GM23248 (cell line): ENCODE measurements at regions of chr5 and their contacts with region 1.

Region 1: DNA sequence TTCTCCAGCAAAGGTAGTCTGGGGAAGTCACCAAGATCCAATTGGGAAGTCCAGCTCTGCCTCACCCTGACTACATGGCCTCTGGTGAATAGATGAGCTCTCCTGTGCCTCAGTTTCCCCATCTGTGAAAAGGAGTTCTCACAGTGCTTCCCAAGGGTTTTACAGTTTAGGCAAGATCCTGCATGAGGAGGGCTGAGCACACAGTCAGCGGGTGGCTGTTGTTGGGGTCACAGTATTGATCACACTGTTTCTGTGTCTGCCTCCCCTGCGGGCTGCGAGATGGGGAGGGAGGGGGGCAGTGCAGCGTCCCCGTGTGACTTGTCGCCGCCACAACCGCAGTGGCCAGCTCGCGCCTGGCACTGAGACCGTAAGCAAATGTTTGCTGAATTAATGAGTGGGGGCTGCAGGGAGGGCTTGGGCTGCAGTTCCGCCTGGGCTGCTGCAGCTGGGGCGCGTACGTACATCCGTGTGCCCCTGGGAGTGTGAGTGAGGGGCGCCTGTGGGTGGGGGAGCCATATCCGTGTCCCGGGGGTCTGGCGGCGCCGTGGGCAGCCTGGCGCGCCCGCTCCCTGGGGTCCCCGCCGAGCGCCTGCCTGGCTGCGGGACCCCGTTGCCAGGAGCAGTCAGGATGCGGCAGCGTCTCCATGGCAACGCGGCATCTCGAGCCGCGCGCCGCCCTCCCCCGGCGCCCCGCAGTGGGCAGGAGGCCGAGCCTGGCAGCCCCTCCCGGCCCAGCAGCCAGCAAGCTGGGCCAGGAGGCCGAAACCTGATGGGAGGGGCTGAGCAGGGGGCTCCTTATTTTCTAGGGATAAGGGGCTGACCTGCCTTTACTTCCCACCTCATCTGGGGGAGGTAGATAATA is 31.4 kb upstream of the PSD2 start:
- DNase-seq: peak; percentile 46
- H3K4me3 ChIP-seq: no peak overlapping the region
- H3K27ac ChIP-seq: no peak overlapping the region
- H3K4me1 ChIP-seq: peaks cover 3% of the 10 kb centered on the region; the same call in 1 of the 2 replicates
- H3K27me3 ChIP-seq: peaks cover 9% of the 10 kb centered on the region; the same call in 1 of the 2 replicates

Region 2: GRCh38 chr5:139633295-139634027 is 130.7 kb before region 1 on chr5:
- in situ Hi-C with region 1: loop called (anchors 5 kb)
- DNase-seq: peak; percentile 78
- H3K4me3 ChIP-seq: no peak overlapping the region
- H3K27ac ChIP-seq: no peak overlapping the region
- H3K4me1 ChIP-seq: peaks cover 25% of the 10 kb centered on the region
- H3K27me3 ChIP-seq: no peaks in the 10 kb centered on the region

Region 3: DNA sequence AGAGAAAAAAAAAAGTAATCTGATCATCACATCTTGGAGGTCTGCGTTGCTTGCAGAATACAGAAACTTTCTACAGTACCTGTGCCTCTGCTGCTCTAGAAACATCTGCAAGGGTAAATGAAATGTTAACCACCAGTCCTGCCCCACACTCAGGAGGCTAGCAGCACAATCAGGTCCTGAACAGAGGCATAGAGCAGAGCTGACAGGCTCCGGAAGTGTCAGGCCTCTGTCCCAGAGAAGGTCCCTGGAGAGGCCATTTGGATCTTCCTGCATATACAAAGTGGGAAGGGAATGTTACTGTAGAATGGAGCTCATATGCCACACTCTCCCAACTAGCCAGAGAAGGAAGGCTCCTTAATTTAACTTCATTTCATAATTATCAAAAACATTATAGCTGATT is 271.7 kb after region 1 on chr5:
- in situ Hi-C with region 1: no loop called
- DNase-seq: no peak
- H3K4me3 ChIP-seq: no peak overlapping the region
- H3K27ac ChIP-seq: no peak overlapping the region
- H3K4me1 ChIP-seq: no peaks in the 10 kb centered on the region
- H3K27me3 ChIP-seq: no peaks in the 10 kb centered on the region; the same call in 1 of the 2 replicates

Region 4: GRCh38 chr5:140113699-140114263 is 349.6 kb after region 1 on chr5 and contains the start of gene PURA:
- in situ Hi-C with region 1: no loop called
- DNase-seq: peak; percentile 97
- H3K4me3 ChIP-seq: peak within 1 kb of the TSS; percentile 78
- H3K27ac ChIP-seq: peak within 1 kb of the TSS; percentile 69
- H3K4me1 ChIP-seq: peaks cover 47% of the 10 kb centered on the region
- H3K27me3 ChIP-seq: no peaks in the 10 kb centered on the region
- total RNA-seq, gene PURA: 24.2 and 30.6 TPM in 2 replicates

Region 5: DNA sequence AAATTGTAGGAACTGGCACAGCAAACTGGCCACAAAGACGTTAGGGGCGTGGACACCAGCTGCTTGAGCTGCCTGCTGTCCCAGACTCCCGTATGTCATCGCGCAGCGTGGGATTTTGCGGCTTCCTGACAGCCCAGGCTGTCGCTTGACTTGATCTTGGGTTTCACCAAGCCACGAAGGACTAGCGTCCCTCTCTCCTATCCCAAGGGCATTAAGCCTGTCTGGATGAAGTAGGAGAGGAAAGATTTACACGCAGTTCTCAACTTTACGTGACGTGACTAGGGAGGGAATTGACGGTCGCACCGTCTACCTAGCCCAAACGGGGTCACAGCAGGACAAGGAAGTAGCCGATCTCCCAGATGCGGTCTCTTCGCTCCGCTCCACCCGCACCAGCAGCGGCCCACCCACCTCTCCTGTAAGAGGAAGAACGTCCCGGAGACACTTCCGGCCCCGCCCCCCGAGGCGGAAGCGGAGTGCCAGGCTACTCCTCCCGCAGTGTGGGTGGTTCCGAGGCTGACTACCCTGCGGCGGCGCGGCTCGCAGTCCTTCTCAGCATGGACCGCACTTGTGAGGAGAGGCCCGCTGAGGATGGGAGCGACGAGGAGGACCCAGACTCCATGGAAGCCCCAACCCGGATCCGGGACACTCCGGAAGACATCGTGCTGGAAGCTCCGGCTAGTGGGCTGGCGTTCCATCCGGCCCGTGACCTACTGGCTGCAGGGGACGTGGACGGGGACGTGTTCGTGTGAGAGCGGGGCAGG is 900.4 kb after region 1 on chr5 and contains the start of gene WDR55:
- in situ Hi-C with region 1: no loop called
- DNase-seq: peak; percentile 98
- H3K4me3 ChIP-seq: peak within 1 kb of the TSS; percentile 79
- H3K27ac ChIP-seq: peak within 1 kb of the TSS; percentile 92
- H3K4me1 ChIP-seq: peaks cover 9% of the 10 kb centered on the region
- H3K27me3 ChIP-seq: no peaks in the 10 kb centered on the region
- total RNA-seq, gene WDR55: 17.5 and 19.6 TPM in 2 replicates